Dendritic cell treated with granulocyte-macrophage colony-stimulating factor and Interleukin-4, amounts not matched to agents 40 ng/mL and 50 ng/mL, for 4 days (primary cell): ENCODE measurements at regions of chr2 and their contacts with region 1.

Region 1: GRCh38 chr2:234550511-234551107 is 53.7 kb upstream of the ARL4C start:
- H3K4me3 Mint-ChIP-seq: no peak overlapping the region
- H3K27ac Mint-ChIP-seq: no peak overlapping the region
- H3K4me1 Mint-ChIP-seq: no peaks in the 10 kb centered on the region
- H3K27me3 Mint-ChIP-seq: peaks cover 9% of the 10 kb centered on the region

Region 2: DNA sequence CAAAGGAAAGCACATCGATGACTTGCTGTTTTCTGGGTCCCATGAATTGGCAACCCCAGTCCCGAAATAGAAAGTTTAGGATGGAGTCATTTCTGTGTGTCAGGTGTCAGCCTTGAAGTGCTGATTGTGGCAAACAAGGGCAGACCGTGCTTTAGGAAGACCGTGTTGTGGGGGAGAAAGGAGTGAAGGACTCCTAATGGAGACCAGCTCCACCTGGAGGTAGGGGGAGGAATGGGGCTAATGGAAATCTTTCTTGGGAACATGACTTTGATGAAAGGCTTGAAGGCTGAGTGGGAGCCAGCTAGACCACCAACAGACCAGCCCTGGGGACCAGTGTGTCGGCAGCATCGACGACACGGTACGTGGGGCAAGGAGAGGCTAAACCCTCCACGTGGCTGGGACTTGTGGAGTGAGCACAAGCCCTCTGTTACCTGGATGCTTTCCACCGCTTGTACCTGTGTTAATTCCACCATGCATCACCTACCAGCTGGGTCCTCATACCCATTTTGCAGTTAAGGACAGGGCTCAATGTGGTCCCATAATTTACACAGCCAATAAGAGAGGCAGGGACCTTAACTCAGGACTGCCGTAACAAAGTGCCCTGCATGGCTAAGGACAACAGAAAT is 505.4 kb after region 1 on chr2:
- intact Hi-C with region 1: loop called (anchors 1 kb)
- H3K4me3 Mint-ChIP-seq: no peak overlapping the region
- H3K27ac Mint-ChIP-seq: no peak overlapping the region
- H3K4me1 Mint-ChIP-seq: peaks cover 38% of the 10 kb centered on the region
- H3K27me3 Mint-ChIP-seq: peaks cover 18% of the 10 kb centered on the region

Region 3: DNA sequence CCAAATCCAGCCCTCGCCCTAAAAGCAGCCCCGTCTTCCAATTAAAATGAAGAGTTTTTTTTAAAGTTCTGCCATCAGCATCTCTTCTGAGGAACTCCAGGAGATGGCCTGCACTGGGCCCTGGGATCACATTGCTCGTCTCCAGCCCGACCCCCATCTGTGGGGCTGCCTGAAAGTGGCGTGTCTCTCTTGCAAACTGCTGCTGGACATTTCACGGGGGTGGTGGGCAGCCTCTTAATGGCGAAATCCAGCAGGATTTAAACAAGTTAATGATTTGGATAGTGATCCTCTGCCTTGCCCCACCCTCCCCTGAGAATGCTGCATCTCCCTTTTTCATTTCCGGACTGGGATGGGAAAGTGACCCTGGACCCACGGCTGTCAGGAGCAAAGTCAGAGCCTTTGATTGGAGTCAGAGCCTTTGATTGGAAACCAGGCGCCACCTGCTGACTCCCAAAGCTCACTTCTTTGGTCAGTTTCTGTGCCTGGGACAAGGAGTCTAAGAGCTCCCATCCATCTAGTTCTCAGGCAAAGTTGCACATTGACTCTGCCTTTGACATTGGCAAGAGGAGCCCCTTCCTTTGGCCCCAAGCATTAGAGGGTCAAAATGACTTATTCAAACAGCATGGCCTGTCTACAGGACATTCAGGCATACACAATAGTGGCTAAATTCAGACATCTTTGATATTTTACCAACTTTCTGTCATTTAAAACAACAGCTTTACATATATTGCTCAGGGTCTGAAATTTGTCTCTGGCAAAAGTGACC is 556.4 kb after region 1 on chr2:
- intact Hi-C with region 1: loop called (anchors 1 kb)
- H3K4me3 Mint-ChIP-seq: no peak overlapping the region
- H3K27ac Mint-ChIP-seq: no peak overlapping the region
- H3K4me1 Mint-ChIP-seq: no peaks in the 10 kb centered on the region
- H3K27me3 Mint-ChIP-seq: no peaks in the 10 kb centered on the region

Region 4: GRCh38 chr2:235116885-235117492 is 566.4 kb after region 1 on chr2:
- intact Hi-C with region 1: loop called (anchors 1 kb)
- H3K4me3 Mint-ChIP-seq: no peak overlapping the region
- H3K27ac Mint-ChIP-seq: no peak overlapping the region
- H3K4me1 Mint-ChIP-seq: no peaks in the 10 kb centered on the region
- H3K27me3 Mint-ChIP-seq: peaks cover 5% of the 10 kb centered on the region